Natural killer cell (primary cell): ENCODE measurements at regions of chr10 and their contacts with region 1.

Region 1: DNA sequence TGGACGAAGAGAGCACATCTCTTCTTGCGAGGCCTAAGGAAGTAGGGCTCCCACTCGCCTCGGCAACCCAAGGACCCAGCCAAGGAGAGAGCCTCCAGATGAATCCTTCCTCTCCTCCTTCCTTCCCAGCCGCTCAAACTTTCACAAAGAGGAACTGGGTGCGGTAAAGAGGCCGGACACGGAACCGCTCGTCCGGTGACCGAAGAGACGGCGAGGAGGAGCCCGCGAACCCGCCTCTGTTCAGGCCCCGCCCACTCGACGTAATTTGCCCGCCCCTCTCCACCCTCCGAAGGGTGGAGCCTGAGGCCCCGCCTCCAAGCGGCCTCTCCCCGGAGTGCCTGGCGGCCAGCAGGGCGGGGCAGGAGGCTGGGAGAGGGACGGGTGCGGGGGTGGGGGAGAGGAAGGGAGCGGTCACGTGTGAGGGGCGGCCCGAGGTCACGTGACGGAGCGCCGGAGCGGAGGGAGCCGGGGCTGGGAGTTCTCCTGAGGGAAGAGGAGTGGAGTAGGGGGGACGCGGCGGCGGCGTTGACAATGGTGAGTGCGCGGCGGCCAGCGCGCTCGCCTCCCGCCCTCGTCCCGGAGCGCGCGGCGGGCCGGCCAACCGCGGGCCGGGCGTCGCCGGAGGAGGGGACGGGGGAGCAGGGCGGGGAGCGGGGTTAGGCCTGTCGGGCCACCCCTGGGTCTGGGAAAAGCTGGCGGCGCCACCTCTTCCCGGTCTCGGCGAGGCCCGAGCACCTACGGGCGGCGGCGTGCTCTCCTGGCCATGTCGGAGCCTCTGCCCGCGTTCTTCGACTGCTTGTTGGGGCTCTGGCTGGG is at the start of gene VPS26A:
- DNase-seq: peak; percentile 99 to 100
- ATAC-seq: peak; percentile 92 to 99 (median 93)
- H3K4me3 ChIP-seq: peak within 1 kb of the TSS; percentile 64
- H3K4me3 Mint-ChIP-seq: peak within 1 kb of the TSS; percentile 95
- H3K27ac ChIP-seq: peak within 1 kb of the TSS; percentile 92
- H3K27ac Mint-ChIP-seq: peak within 1 kb of the TSS; percentile 96
- H3K4me1 ChIP-seq: peaks cover 17% of the 10 kb centered on the region
- H3K4me1 Mint-ChIP-seq: peaks cover 16 to 21% of the 10 kb centered on the region in 2 donors
- H3K27me3 ChIP-seq: no peaks in the 10 kb centered on the region
- H3K27me3 Mint-ChIP-seq: no peaks in the 10 kb centered on the region
- CTCF ChIP-seq: no peak
- total RNA-seq, gene VPS26A: 62.6 to 86.4 (median 86.2) TPM

Region 2: DNA sequence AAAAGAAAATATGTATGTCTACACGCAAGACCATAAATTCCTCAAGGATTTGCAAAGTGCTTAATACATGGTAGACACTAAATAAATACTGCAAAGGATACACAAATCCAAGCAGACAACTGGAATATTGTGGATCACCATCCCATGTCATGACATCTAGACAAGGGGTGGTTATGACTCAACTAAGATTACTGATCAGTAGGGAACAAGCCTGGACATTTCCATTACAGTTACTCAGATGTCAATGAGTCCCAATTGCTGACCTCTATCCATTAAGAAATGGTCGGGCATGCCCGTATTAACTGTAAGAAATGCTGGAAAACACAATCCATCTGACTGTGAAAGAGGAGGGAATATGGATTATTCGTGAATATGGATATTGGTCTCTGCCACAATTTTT is 689.3 kb before region 1 on chr10:
- intact Hi-C with region 1: no loop called
- DNase-seq: no peak
- ATAC-seq: no peak
- H3K4me3 ChIP-seq: no peak overlapping the region
- H3K4me3 Mint-ChIP-seq: no peak overlapping the region
- H3K27ac ChIP-seq: no peak overlapping the region
- H3K27ac Mint-ChIP-seq: no peak overlapping the region
- H3K4me1 ChIP-seq: no peaks in the 10 kb centered on the region
- H3K4me1 Mint-ChIP-seq: no peaks in the 10 kb centered on the region
- H3K27me3 ChIP-seq: no peaks in the 10 kb centered on the region
- H3K27me3 Mint-ChIP-seq: no peaks in the 10 kb centered on the region
- CTCF ChIP-seq: no peak

Region 3: DNA sequence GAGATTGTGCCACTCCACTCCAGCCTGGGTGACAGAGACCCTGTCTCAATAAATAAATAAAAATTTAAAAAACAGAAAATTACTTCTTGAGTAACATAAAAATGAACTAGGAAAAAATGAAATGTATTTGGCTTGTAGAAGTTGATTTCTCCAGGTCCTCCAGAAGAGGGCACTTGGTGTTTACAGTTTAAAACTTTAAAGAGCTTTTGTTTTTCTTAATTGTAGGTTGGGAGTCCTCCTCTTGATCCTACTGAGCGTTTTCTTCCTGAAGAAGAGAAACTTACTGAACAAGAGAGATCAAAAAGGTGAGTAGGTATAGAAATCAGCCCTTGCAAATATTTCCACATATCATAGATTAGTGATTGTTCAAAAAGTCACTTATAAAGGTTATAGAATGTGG is 119.1 kb before region 1 on chr10:
- intact Hi-C with region 1: loop called (anchors 1 kb)
- DNase-seq: peak in 1 of 2 donors; percentile 74
- ATAC-seq: peak; percentile 67 to 90 (median 72)
- H3K4me3 ChIP-seq: no peak overlapping the region
- H3K4me3 Mint-ChIP-seq: no peak overlapping the region
- H3K27ac ChIP-seq: no peak overlapping the region
- H3K27ac Mint-ChIP-seq: peak overlapping the region; percentile 50 to 60
- H3K4me1 ChIP-seq: no peaks in the 10 kb centered on the region
- H3K4me1 Mint-ChIP-seq: peaks cover 5 to 8% of the 10 kb centered on the region in 2 donors
- H3K27me3 ChIP-seq: no peaks in the 10 kb centered on the region
- H3K27me3 Mint-ChIP-seq: no peaks in the 10 kb centered on the region
- CTCF ChIP-seq: peak; percentile 79

Region 4: GRCh38 chr10:69080226-69080625 is 43.7 kb before region 1 on chr10:
- intact Hi-C with region 1: no loop called
- DNase-seq: no peak
- ATAC-seq: peak in 1 of 3 donors; percentile 59
- H3K4me3 ChIP-seq: no peak overlapping the region
- H3K4me3 Mint-ChIP-seq: no peak overlapping the region
- H3K27ac ChIP-seq: no peak overlapping the region
- H3K27ac Mint-ChIP-seq: no peak overlapping the region
- H3K4me1 ChIP-seq: no peaks in the 10 kb centered on the region
- H3K4me1 Mint-ChIP-seq: peaks cover 2 to 6% of the 10 kb centered on the region in 2 donors
- H3K27me3 ChIP-seq: no peaks in the 10 kb centered on the region
- H3K27me3 Mint-ChIP-seq: no peaks in the 10 kb centered on the region
- CTCF ChIP-seq: no peak

Region 5: GRCh38 chr10:69101451-69102095 is 22.4 kb before region 1 on chr10:
- intact Hi-C with region 1: loop called (anchors 2 kb)
- DNase-seq: peak; percentile 49 to 55
- ATAC-seq: peak; percentile 63 to 70 (median 69)
- H3K4me3 ChIP-seq: no peak overlapping the region
- H3K4me3 Mint-ChIP-seq: peak overlapping the region; percentile 85
- H3K27ac ChIP-seq: peak overlapping the region; percentile 77
- H3K27ac Mint-ChIP-seq: peak overlapping the region; percentile 95 to 96
- H3K4me1 ChIP-seq: peaks cover 55% of the 10 kb centered on the region
- H3K4me1 Mint-ChIP-seq: peaks cover 62 to 71% of the 10 kb centered on the region in 2 donors
- H3K27me3 ChIP-seq: no peaks in the 10 kb centered on the region
- H3K27me3 Mint-ChIP-seq: no peaks in the 10 kb centered on the region
- CTCF ChIP-seq: no peak

Region 6: DNA sequence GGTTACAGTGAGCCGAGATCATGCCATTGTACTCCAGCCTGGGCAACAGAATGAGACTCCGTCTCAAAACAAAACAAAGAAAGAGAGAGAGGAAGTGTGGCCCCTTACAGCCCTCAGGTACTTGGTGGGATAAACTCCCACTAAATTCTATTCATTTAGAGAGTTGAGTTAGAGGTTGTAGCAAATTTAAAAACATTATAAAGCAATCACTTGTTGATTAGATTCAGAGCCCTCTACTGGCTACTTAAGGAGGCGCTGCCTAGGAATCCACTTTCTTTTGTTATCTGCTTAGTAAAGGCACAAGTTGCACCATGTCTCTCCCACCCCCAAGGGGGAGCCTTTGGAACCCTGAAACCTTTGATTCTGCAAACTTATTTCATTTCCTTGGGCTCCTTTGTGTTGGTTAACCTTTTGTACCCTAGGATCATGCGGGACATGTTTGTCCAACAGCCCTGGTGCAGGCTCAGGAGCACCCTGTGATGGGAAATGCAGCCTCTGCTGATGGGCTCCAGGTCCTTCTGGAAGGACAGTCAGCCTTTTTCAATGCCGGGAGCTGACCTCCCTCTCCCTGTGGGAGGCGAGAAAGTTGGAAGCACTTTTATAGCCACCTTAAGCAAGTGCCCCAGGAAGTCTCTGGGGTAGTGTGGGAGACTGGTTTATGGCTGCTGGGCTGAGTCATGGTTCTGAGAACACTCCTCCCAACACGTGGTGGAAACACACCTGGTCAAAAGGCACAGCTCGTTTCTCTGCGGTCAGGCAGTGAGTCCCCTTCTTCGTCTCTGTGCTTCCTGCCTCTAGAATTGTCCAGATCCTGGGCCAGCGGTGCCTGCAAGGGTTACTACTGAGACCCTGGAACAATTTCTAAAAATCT is 98.4 kb after region 1 on chr10:
- intact Hi-C with region 1: loop called (anchors 1 kb)
- DNase-seq: peak; percentile 74 to 79
- ATAC-seq: peak; percentile 89 to 93 (median 92)
- H3K4me3 ChIP-seq: peak overlapping the region; percentile 2
- H3K4me3 Mint-ChIP-seq: peak overlapping the region; percentile 69
- H3K27ac ChIP-seq: peak overlapping the region; percentile 38
- H3K27ac Mint-ChIP-seq: peak overlapping the region; percentile 74 to 93
- H3K4me1 ChIP-seq: peaks cover 44% of the 10 kb centered on the region
- H3K4me1 Mint-ChIP-seq: peaks cover 36 to 53% of the 10 kb centered on the region in 2 donors
- H3K27me3 ChIP-seq: no peaks in the 10 kb centered on the region
- H3K27me3 Mint-ChIP-seq: no peaks in the 10 kb centered on the region
- CTCF ChIP-seq: peak; percentile 49

Region 7: DNA sequence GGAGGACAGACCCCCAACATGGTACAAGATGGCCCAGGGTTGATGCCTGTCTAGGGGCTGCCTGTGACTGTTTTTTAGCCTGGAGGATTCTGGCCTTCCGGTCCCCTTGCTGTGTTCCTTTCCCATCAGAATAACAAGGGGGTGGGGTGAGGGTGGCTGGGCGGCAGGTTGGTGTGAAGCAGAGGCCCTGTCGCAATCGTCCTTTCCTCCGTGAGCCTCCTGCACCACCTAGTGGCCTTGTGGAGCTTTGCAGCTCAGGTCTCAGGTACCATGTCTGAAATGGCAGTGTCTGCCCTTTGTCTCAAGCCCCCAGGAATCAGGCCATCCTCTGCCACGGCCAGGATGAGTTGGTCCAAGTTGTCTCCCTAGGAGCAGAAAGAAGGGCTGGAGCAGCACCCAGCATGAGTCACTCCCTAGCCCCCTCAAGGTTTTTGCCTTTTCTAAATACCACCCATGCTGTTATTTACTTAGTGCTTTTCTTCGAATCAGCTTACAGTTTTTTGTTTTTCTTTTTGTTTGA is 268.6 kb after region 1 on chr10:
- intact Hi-C with region 1: loop called (anchors 10 kb)
- DNase-seq: peak; percentile 76 to 93
- ATAC-seq: peak; percentile 95 to 100 (median 100)
- H3K4me3 ChIP-seq: no peak overlapping the region
- H3K4me3 Mint-ChIP-seq: no peak overlapping the region
- H3K27ac ChIP-seq: peak overlapping the region; percentile 33
- H3K27ac Mint-ChIP-seq: peak overlapping the region in 1 of 2 donors; percentile 35
- H3K4me1 ChIP-seq: peaks cover 10% of the 10 kb centered on the region
- H3K4me1 Mint-ChIP-seq: peaks cover 10 to 12% of the 10 kb centered on the region in 2 donors
- H3K27me3 ChIP-seq: no peaks in the 10 kb centered on the region
- H3K27me3 Mint-ChIP-seq: no peaks in the 10 kb centered on the region
- CTCF ChIP-seq: peak; percentile 90